Ascending aorta (tissue), 2 donors: ENCODE measurements at regions of chr17 and their contacts with region 1.

Region 1: DNA sequence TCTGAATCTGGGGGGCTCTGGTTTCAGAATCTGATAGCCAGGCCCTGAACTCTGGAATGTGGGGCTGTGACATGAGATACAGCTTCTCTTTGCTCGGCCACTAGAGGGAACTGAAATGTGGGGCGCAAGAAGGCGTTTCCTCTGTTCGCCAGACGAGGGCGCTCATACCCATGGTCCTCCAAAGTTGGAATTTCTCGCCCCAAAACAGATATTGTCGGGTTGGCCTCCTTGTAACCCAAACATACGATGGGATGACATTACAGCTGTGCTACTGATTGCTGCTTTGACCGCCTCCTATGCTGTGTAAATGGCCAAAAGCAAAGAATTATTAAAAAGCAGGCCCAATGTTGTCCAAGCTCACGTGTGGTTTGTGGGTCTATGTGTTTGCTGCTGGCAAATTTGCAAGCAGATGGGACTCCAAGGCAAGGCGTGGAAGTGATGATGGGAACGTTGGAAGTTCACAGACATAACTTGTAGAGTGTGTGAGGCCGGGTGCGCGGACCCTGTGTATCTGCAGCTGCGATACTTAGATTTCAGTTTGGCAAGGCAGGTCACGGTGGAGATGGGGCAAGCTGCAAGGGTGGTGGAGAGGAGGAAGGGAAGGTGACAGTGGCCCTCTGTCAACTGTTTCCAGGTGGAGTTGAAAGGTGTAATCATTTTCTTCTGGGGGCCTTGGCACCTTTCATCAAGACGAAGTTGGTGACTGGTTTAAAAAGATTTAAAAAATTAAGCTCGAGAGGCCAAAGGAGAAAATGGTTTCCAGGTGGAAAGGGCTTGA is 13.0 kb upstream of the MSI2 start:
- DNase-seq: peak in 1 of 2 donors; percentile 81
- H3K4me3 ChIP-seq: no peak overlapping the region
- H3K27ac ChIP-seq: no peak overlapping the region
- H3K4me1 ChIP-seq: peaks cover 0 to 2% of the 10 kb centered on the region in 2 donors
- H3K27me3 ChIP-seq: no peaks in the 10 kb centered on the region
- CTCF ChIP-seq: peak; percentile 93 to 98 (median 95)

Region 2: GRCh38 chr17:57671667-57672632 is 428.6 kb after region 1 on chr17:
- intact Hi-C with region 1: loop called (anchors 1 kb)
- DNase-seq: peak in 1 of 2 donors; percentile 80
- H3K4me3 ChIP-seq: no peak overlapping the region
- H3K27ac ChIP-seq: no peak overlapping the region
- H3K4me1 ChIP-seq: peaks cover 0 to 4% of the 10 kb centered on the region in 2 donors
- H3K27me3 ChIP-seq: no peaks in the 10 kb centered on the region
- CTCF ChIP-seq: peak; percentile 86 to 96 (median 95)

Region 3: DNA sequence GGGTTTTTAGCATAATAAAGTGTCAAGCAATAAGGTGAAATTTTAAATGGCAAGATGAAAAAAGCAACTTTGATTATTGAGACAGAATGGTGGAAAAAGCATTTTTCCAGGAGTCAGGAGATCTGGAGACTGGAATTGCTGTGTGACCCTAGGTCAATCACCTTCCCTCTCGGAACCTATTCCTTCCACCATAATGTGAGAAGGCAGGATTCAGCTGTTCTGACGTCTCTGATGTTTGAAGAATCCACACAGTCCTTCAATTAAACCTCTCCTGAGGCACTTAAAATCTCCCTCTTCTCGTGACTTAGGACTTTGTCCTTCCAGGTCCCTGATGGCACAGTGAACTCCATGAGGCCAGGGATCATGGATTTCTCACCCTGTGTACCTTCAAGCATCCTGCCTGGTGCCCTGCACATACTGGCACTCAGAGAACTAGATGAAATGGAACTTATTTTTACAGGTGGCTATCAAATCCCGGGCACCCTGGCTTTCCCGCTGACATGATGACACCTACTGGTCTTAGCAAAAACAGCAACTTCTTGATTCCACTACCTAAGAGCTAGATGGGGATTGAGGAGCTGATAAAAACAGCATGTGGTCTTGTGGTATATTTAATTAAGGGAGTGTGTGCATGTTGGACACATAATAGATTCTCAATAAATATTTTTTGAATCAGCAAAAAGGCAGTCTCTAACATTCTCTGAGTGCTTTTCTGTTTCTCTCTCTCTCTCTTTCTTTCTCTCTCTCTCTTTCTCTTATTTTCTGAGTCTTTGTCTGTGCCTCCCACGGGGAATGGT is 504.1 kb after region 1 on chr17:
- intact Hi-C with region 1: loop called (anchors 1 kb)
- DNase-seq: no peak
- H3K4me3 ChIP-seq: no peak overlapping the region
- H3K27ac ChIP-seq: no peak overlapping the region
- H3K4me1 ChIP-seq: no peaks in the 10 kb centered on the region
- H3K27me3 ChIP-seq: no peaks in the 10 kb centered on the region
- CTCF ChIP-seq: peak; percentile 50 to 68 (median 54)

Region 4: GRCh38 chr17:58112970-58113631 is 869.7 kb after region 1 on chr17:
- intact Hi-C with region 1: loop called (anchors 10 kb)
- DNase-seq: peak; percentile 17 to 87
- H3K4me3 ChIP-seq: no peak overlapping the region
- H3K27ac ChIP-seq: no peak overlapping the region
- H3K4me1 ChIP-seq: no peaks in the 10 kb centered on the region
- H3K27me3 ChIP-seq: no peaks in the 10 kb centered on the region
- CTCF ChIP-seq: peak; percentile 88 to 98 (median 90)